Prostate gland (tissue), 2 donors: ENCODE measurements at regions of chr7 and their contacts with region 1.

Region 1: GRCh38 chr7:26864309-26865093 is at the start of gene SKAP2:
- DNase-seq: peak; percentile 99
- H3K4me3 ChIP-seq: peak within 1 kb of the TSS; percentile 78 to 87
- H3K27ac ChIP-seq: peak within 1 kb of the TSS; percentile 93 to 97
- H3K4me1 ChIP-seq: no peaks in the 10 kb centered on the region
- H3K27me3 ChIP-seq: no peaks in the 10 kb centered on the region
- CTCF ChIP-seq: no peak
- POLR2A ChIP-seq: peak; percentile 88
- total RNA-seq, gene SKAP2: 16.1 to 25.6 TPM

Region 2: DNA sequence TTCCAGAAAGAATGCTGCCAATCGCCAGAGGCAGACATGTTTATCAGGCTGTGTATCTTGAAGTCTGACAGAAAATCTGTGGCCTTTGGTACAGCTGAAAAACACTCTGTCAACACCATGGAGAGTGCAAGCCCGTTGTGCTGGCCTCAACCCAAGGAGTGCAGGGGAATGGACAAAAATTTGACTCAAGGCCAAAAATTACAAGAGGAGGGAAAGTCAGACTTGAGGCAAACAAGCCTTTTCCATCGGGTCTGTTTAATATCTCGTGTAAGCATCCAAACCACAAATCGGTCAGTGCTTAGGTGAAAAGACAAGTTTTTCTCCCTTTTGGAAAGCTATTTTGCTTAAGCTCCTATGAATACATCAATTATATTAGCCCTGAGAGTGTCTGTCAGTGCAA is 1017.8 kb before region 1 on chr7:
- intact Hi-C with region 1: no loop called
- DNase-seq: peak; percentile 58
- H3K4me3 ChIP-seq: no peak overlapping the region
- H3K27ac ChIP-seq: peak overlapping the region in 1 of 2 donors; percentile 15
- H3K4me1 ChIP-seq: peaks cover under 1% of the 10 kb centered on the region
- H3K27me3 ChIP-seq: no peaks in the 10 kb centered on the region
- CTCF ChIP-seq: no peak
- POLR2A ChIP-seq: no peak

Region 3: DNA sequence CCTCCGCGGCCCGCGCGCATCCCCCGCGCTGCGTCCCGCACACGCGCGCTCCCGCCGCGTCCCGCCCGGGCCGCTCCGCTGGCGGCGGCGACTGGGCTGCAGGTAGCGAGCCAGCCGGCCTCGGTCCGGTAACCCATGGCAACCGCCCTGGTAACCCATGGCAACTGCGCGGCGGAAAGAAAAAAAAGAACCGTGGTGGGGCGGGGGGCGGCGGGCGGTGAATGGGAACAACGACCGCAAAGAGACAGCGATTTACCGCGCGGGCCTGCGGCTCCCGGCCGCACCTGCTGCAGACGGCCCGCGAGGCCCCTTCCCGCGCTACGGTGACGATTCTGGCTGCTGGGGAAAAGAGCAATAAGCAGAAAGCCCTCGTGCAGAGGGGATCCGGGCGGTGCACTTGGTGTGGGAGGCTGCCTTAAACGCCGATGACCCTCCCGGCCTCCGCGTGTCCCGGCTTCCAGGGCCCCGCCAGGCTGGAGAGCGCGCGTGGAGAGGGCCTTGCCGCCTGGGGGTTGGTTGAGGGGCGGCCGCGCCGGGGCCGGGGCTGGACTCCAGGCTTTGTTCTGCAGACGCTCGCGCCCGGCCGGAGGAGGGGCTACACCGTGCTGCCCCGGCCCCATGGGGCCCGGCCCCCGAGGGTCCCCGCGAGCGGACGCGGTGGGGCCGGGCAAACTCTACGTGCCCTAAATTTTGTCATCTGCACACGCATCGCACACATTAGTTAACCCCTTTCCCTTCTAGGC is 488.2 kb before region 1 on chr7:
- intact Hi-C with region 1: loop called (anchors 10 kb)
- DNase-seq: no peak
- H3K4me3 ChIP-seq: peak overlapping the region; percentile 22 to 37
- H3K27ac ChIP-seq: no peak overlapping the region
- H3K4me1 ChIP-seq: no peaks in the 10 kb centered on the region
- H3K27me3 ChIP-seq: no peaks in the 10 kb centered on the region
- CTCF ChIP-seq: no peak
- POLR2A ChIP-seq: no peak

Region 4: DNA sequence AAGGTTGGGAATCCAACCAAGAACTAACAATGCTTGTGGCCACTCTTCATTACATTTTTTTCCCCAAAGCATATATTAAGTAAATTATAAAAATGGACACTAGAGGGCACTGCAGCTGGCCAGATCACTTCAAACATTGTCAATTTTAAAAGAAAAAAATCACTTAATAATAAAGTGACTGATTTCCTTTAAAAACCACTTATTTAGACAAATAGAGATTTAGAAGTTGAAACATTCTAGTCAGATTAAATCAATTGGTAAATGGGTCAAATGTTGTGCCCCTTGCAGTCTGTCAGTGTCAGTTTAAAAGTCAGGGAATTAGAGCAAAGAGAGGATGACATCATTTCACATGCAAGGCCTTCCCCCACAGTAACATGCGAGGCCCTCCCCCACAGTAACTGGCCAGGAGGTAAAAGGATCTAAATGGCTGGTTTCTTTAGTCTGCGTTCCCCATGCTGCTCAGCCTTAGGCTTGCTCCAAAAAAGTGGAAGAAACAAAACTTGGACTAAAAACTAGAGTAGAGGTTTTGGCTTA is 178.0 kb before region 1 on chr7:
- intact Hi-C with region 1: loop called (anchors 5 kb)
- DNase-seq: no peak
- H3K4me3 ChIP-seq: no peak overlapping the region
- H3K27ac ChIP-seq: no peak overlapping the region
- H3K4me1 ChIP-seq: no peaks in the 10 kb centered on the region
- H3K27me3 ChIP-seq: no peaks in the 10 kb centered on the region
- CTCF ChIP-seq: peak; percentile 49 to 77 (median 66)
- POLR2A ChIP-seq: no peak

Region 5: DNA sequence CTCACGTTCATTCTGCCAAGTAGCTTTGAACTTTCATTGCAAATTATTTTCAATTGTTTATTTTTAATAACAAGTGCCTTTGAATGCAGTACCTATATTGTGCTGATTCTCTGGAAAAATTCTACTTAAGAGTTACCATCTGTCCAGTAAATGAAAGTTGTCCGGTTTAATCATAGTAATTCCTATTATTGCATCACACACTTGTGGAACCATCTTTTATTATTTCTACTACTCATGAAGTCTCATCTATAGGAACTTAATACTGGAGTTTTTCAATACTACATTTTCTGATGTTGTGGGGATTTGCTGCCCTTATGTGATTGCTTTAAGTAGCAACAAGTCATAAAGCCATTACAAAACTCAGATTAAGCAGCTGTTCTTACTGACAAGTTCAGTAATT is 16.4 kb after region 1 on chr7:
- intact Hi-C with region 1: no loop called
- DNase-seq: no peak
- H3K4me3 ChIP-seq: no peak overlapping the region
- H3K27ac ChIP-seq: no peak overlapping the region
- H3K4me1 ChIP-seq: no peaks in the 10 kb centered on the region
- H3K27me3 ChIP-seq: no peaks in the 10 kb centered on the region
- CTCF ChIP-seq: no peak
- POLR2A ChIP-seq: no peak

Region 6: GRCh38 chr7:26987338-26987737 is 122.8 kb after region 1 on chr7:
- intact Hi-C with region 1: no loop called
- DNase-seq: no peak
- H3K4me3 ChIP-seq: no peak overlapping the region
- H3K27ac ChIP-seq: no peak overlapping the region
- H3K4me1 ChIP-seq: no peaks in the 10 kb centered on the region
- H3K27me3 ChIP-seq: no peaks in the 10 kb centered on the region
- CTCF ChIP-seq: no peak
- POLR2A ChIP-seq: no peak

Region 7: DNA sequence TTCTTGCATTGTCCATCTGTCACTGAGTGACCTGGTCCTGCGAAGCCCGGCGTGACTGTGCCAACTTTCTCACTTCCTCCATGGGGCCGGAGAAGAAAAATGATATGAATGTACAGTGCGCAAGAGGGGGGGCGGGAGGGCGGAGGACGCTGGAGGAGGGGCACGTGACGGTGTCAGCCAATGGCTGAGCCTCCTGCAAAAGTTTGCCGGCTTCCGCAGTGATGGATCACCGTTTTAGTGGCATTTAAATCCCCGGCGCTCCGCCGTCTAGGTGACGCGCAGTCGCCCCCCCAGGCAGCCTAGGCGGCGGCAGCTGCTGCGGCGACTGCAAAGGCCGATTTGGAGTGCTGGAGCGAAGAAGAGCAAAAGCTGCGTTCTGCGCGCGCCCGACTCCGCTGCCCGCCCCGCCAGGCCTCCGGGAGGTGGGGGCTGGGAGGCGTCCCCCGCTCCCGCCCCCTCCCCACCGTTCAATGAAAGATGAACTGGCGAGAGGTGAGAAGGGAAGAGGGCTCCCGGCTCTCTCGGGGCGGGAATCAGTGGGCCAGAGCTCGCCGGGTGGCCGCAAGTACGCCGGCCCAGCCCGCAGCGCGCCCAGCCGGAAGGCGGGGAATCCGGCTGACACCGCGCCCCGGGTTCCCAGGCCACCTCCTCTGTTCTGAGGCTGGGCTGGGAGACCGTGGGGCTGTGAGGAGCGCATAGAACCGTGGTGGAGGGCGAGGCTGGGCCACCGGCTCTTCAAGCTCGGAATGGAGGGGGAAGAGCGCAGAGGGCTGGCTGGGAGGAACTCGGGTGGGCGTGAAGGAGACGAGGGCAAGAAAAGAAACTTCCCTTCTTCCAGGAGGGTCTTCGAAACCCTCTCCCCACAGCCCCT is 231.6 kb after region 1 on chr7 and contains the start of gene HOXA1:
- intact Hi-C with region 1: loop called (anchors 10 kb)
- DNase-seq: peak; percentile 84
- H3K4me3 ChIP-seq: peak within 1 kb of the TSS; percentile 62
- H3K27ac ChIP-seq: peak within 1 kb of the TSS; percentile 76 to 78
- H3K4me1 ChIP-seq: peaks cover 5% of the 10 kb centered on the region
- H3K27me3 ChIP-seq: no peaks in the 10 kb centered on the region
- CTCF ChIP-seq: peak in 1 of 4 experiments; percentile 16
- POLR2A ChIP-seq: peak; percentile 84
- total RNA-seq, gene HOXA1: 2.1 TPM in 1 of 2 donors, not detected in the other

Region 8: GRCh38 chr7:27130540-27131389 is 266.3 kb after region 1 on chr7 and contains the start of gene HOXA4:
- intact Hi-C with region 1: loop called (anchors 5 kb)
- DNase-seq: peak; percentile 94
- H3K4me3 ChIP-seq: peak within 1 kb of the TSS; percentile 62 to 74
- H3K27ac ChIP-seq: peak within 1 kb of the TSS; percentile 71 to 82
- H3K4me1 ChIP-seq: peaks cover 6% of the 10 kb centered on the region
- H3K27me3 ChIP-seq: no peaks in the 10 kb centered on the region
- CTCF ChIP-seq: peak in 1 of 4 experiments; percentile 7
- POLR2A ChIP-seq: peak; percentile 76
- total RNA-seq, gene HOXA4: 1.4 to 1.8 TPM